MCF 10A (cell line): ENCODE measurements at regions of chrX and their contacts with region 1.

Region 1: DNA sequence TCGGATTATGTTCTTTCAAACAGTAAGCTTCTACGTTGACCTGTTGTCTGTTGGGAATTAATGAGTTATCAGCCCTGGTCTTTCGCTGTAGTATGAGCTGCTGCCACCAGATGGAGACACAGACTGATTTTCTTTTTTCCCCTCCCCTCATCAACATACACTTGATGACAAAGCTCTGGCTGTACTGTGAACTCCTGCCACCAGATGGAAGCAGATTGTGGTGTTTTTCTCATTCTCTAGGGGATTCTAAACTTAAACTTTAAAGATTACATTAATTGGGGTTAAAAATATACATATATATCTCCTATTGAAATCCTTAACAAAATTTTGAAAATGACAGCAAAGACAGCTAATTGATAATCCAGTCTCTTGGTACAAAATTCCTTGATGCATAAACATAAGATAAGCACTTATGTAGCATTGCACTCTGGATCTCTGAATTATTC is 44.8 kb downstream of the SMS start:
- DNase-seq: peak; percentile 85
- H3K4me3 Mint-ChIP-seq: no peak overlapping the region
- H3K27ac Mint-ChIP-seq: no peak overlapping the region
- H3K4me1 Mint-ChIP-seq: no peaks in the 10 kb centered on the region
- H3K27me3 Mint-ChIP-seq: peaks cover 62% of the 10 kb centered on the region
- CTCF ChIP-seq: peak; percentile 92

Region 2: DNA sequence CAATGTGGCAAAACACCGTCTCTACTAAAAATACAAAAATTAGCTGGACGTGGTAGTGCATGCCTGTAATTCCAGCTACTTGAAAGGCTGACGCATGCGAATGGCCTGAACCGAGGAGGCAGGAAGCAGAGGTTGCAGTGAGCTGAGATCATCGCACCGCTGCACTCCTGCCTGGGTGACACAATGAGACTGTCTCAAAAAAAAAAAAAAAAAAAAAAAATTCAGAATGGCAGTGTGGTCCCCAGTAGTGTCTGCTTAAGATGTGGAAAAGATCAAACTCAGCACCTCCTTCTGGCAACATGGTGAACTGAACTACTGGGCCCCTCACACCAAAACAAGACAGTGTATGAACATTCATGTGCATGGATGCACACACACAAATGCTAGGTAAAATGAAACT is 12.6 kb before region 1 on chrX:
- CTCF ChIA-PET with region 1: interaction called, 30 read pairs
- POLR2A ChIA-PET with region 1: no interaction called
- intact Hi-C with region 1: no loop called
- DNase-seq: no peak
- H3K4me3 Mint-ChIP-seq: no peak overlapping the region
- H3K27ac Mint-ChIP-seq: no peak overlapping the region
- H3K4me1 Mint-ChIP-seq: peaks cover 6% of the 10 kb centered on the region
- H3K27me3 Mint-ChIP-seq: peaks cover 65% of the 10 kb centered on the region
- CTCF ChIP-seq: no peak

Region 3: GRCh38 chrX:22192417-22193060 is 207.2 kb after region 1 on chrX:
- CTCF ChIA-PET with region 1: interaction called, 26 read pairs
- POLR2A ChIA-PET with region 1: no interaction called
- intact Hi-C with region 1: loop called (anchors 1 kb)
- DNase-seq: peak; percentile 75
- H3K4me3 Mint-ChIP-seq: no peak overlapping the region
- H3K27ac Mint-ChIP-seq: no peak overlapping the region
- H3K4me1 Mint-ChIP-seq: peaks cover 6% of the 10 kb centered on the region
- H3K27me3 Mint-ChIP-seq: peaks cover 60% of the 10 kb centered on the region
- CTCF ChIP-seq: peak; percentile 76

Region 4: GRCh38 chrX:23008431-23009099 is 1023.2 kb after region 1 on chrX:
- CTCF ChIA-PET with region 1: no interaction called
- POLR2A ChIA-PET with region 1: no interaction called
- intact Hi-C with region 1: loop called (anchors 2 kb)
- DNase-seq: peak; percentile 54
- H3K4me3 Mint-ChIP-seq: no peak overlapping the region
- H3K27ac Mint-ChIP-seq: no peak overlapping the region
- H3K4me1 Mint-ChIP-seq: peaks cover 8% of the 10 kb centered on the region
- H3K27me3 Mint-ChIP-seq: peaks cover 28% of the 10 kb centered on the region
- CTCF ChIP-seq: peak; percentile 37

Region 5: GRCh38 chrX:23616361-23616760 is 1631.0 kb after region 1 on chrX:
- CTCF ChIA-PET with region 1: interaction called, 22 read pairs
- POLR2A ChIA-PET with region 1: no interaction called
- intact Hi-C with region 1: loop called (anchors 1 kb)
- DNase-seq: peak; percentile 27
- H3K4me3 Mint-ChIP-seq: no peak overlapping the region
- H3K27ac Mint-ChIP-seq: no peak overlapping the region
- H3K4me1 Mint-ChIP-seq: no peaks in the 10 kb centered on the region
- H3K27me3 Mint-ChIP-seq: peaks cover 41% of the 10 kb centered on the region
- CTCF ChIP-seq: peak; percentile 50